Psoas muscle (tissue), 8 donors: ENCODE measurements at regions of chr7 and their contacts with region 1.

Region 1: GRCh38 chr7:24384362-24385030 is 100.5 kb downstream of the NPY start:
- DNase-seq: no peak
- ATAC-seq: no peak
- H3K4me3 ChIP-seq: no peak overlapping the region
- H3K27ac ChIP-seq: no peak overlapping the region
- H3K4me1 ChIP-seq: no peaks in the 10 kb centered on the region
- H3K27me3 ChIP-seq: no peaks in the 10 kb centered on the region
- CTCF ChIP-seq: no peak

Region 2: GRCh38 chr7:24284699-24285506 is 99.6 kb before region 1 on chr7:
- intact Hi-C with region 1: loop called in 1 of 2 experiments (anchors 5 kb)
- DNase-seq: peak in 1 of 2 donors; percentile 36
- ATAC-seq: peak; percentile 25 to 59 (median 36)
- H3K4me3 ChIP-seq: peak overlapping the region; percentile 44
- H3K27ac ChIP-seq: no peak overlapping the region
- H3K4me1 ChIP-seq: peaks cover 5% of the 10 kb centered on the region
- H3K27me3 ChIP-seq: peaks cover 0 to 57% (median 12%) of the 10 kb centered on the region in 3 donors
- CTCF ChIP-seq: no peak